ENCODE measurements at regions of chr6 and their contacts with region 1.

Region 1: GRCh38 chr6:35731736-35732532 is 4.9 kb upstream of the ARMC12 start:
- DNase-seq: peak; percentile 99
- ATAC-seq: peak; percentile 57
- H3K4me3 Mint-ChIP-seq: peak overlapping the region; percentile 77
- H3K27ac Mint-ChIP-seq: peak overlapping the region; percentile 95
- H3K4me1 Mint-ChIP-seq: peaks cover 84% of the 10 kb centered on the region
- H3K27me3 Mint-ChIP-seq: no peaks in the 10 kb centered on the region

Region 2: GRCh38 chr6:35297601-35298481 is 434.1 kb before region 1 on chr6 and contains the start of gene DEF6:
- CTCF ChIA-PET with region 1: no interaction called
- POLR2A ChIA-PET with region 1: no interaction called
- intact Hi-C with region 1: loop called (anchors 2 to 5 kb)
- DNase-seq: peak; percentile 95
- ATAC-seq: peak; percentile 82
- H3K4me3 Mint-ChIP-seq: peak within 1 kb of the TSS; percentile 89
- H3K27ac Mint-ChIP-seq: peak within 1 kb of the TSS; percentile 96
- H3K4me1 Mint-ChIP-seq: peaks cover 48% of the 10 kb centered on the region
- H3K27me3 Mint-ChIP-seq: no peaks in the 10 kb centered on the region
- total RNA-seq, gene DEF6: 74.1 to 86.6 TPM

Region 3: GRCh38 chr6:35552285-35552917 is 179.5 kb before region 1 on chr6:
- CTCF ChIA-PET with region 1: interaction called, 25 read pairs
- POLR2A ChIA-PET with region 1: no interaction called
- intact Hi-C with region 1: no loop called
- DNase-seq: peak; percentile 80
- ATAC-seq: peak; percentile 60
- H3K4me3 Mint-ChIP-seq: no peak overlapping the region
- H3K27ac Mint-ChIP-seq: no peak overlapping the region
- H3K4me1 Mint-ChIP-seq: no peaks in the 10 kb centered on the region
- H3K27me3 Mint-ChIP-seq: no peaks in the 10 kb centered on the region

Region 4: GRCh38 chr6:35601331-35602132 is 130.4 kb before region 1 on chr6:
- CTCF ChIA-PET with region 1: interaction called, 49 read pairs
- POLR2A ChIA-PET with region 1: interaction called, 3 read pairs
- intact Hi-C with region 1: loop called (anchors 5 kb)
- DNase-seq: peak; percentile 68
- ATAC-seq: peak; percentile 80
- H3K4me3 Mint-ChIP-seq: peak overlapping the region; percentile 47
- H3K27ac Mint-ChIP-seq: peak overlapping the region; percentile 80
- H3K4me1 Mint-ChIP-seq: peaks cover 76% of the 10 kb centered on the region
- H3K27me3 Mint-ChIP-seq: no peaks in the 10 kb centered on the region

Region 5: GRCh38 chr6:35651244-35651643 is 80.7 kb before region 1 on chr6:
- CTCF ChIA-PET with region 1: interaction called, 47 read pairs
- POLR2A ChIA-PET with region 1: no interaction called
- intact Hi-C with region 1: no loop called
- DNase-seq: no peak
- ATAC-seq: no peak
- H3K4me3 Mint-ChIP-seq: no peak overlapping the region
- H3K27ac Mint-ChIP-seq: no peak overlapping the region
- H3K4me1 Mint-ChIP-seq: peaks cover 50% of the 10 kb centered on the region
- H3K27me3 Mint-ChIP-seq: no peaks in the 10 kb centered on the region

Region 6: GRCh38 chr6:35688581-35689322 is 43.2 kb before region 1 on chr6 and contains the start of gene FKBP5:
- CTCF ChIA-PET with region 1: interaction called, 41 read pairs
- POLR2A ChIA-PET with region 1: interaction called, 6 read pairs
- intact Hi-C with region 1: loop called (anchors 1 kb)
- DNase-seq: peak; percentile 94
- ATAC-seq: peak; percentile 95
- H3K4me3 Mint-ChIP-seq: peak within 1 kb of the TSS; percentile 93
- H3K27ac Mint-ChIP-seq: peak within 1 kb of the TSS; percentile 93
- H3K4me1 Mint-ChIP-seq: peaks cover 8% of the 10 kb centered on the region
- H3K27me3 Mint-ChIP-seq: no peaks in the 10 kb centered on the region
- total RNA-seq, gene FKBP5: 140 to 141 TPM

Region 7: DNA sequence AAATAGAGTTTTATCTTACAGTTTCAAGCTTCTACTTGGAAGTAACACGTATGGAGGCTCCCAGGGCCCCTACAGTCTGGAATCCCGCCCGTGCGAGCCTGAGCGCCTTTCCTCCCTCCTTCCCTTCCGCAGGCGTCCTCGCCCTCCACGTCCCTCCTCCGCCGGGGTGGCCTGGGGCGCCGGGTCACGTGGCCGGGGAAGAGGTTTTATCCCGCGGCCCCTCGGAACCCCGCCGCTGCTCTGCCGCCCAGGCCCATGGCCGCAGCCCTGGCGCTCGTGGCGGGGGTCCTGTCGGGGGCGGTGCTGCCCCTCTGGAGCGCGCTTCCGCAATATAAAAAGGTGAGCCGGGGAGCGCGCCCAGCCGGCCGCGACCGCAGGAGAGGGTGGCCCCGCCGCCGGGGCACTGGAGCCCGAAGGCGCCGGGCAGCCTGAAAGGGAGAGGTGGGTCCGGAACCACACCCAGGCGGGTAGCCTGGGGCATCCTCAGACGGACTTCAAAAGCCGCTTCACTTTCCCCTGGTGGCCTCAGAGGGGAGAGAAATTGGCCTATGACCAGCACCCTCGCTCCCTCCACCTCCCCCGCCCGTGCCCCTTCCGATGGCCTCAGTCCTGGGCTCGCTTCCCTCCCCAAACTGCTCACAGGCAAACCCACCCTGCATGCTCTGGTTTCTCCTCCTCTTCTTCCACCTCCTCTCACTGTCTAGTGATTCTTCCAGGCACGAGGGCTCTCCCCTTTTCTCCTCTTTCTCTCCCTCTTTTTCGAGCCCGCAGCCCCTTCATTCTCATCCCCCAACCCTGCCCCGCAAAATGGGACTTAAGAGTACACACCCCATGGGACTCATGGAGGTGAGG is 44.7 kb after region 1 on chr6 and contains the start of gene CLPSL2:
- CTCF ChIA-PET with region 1: no interaction called
- POLR2A ChIA-PET with region 1: no interaction called
- intact Hi-C with region 1: no loop called
- DNase-seq: peak; percentile 18
- ATAC-seq: peak; percentile 33
- H3K4me3 Mint-ChIP-seq: peak within 1 kb of the TSS; percentile 9
- H3K27ac Mint-ChIP-seq: no peak within 1 kb of the TSS
- H3K4me1 Mint-ChIP-seq: peaks cover 5% of the 10 kb centered on the region
- H3K27me3 Mint-ChIP-seq: peaks cover 23% of the 10 kb centered on the region
- total RNA-seq, gene CLPSL2: not detected

Region 8: DNA sequence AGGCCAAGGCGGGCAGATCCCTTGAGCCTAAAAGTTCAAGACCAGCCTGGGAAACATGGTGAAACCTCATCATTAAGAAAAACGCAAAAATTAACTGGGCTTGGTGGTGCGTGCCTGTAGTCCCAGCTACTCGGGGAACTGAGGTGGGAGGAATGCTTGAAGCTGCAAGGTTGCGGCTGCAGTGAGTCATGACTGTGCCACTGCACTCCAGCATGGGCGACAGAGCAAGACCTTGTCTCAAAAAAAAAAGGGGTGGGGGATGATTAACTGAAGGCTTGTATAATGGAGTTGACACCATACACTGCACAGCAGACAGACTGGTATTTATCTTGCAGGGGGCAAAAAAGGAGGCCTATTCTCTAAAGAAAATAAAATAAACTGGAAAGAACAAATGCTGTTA is 161.3 kb after region 1 on chr6:
- CTCF ChIA-PET with region 1: no interaction called
- POLR2A ChIA-PET with region 1: no interaction called
- intact Hi-C with region 1: no loop called
- DNase-seq: no peak
- ATAC-seq: no peak
- H3K4me3 Mint-ChIP-seq: no peak overlapping the region
- H3K27ac Mint-ChIP-seq: no peak overlapping the region
- H3K4me1 Mint-ChIP-seq: peaks cover 14% of the 10 kb centered on the region
- H3K27me3 Mint-ChIP-seq: no peaks in the 10 kb centered on the region

Region 9: DNA sequence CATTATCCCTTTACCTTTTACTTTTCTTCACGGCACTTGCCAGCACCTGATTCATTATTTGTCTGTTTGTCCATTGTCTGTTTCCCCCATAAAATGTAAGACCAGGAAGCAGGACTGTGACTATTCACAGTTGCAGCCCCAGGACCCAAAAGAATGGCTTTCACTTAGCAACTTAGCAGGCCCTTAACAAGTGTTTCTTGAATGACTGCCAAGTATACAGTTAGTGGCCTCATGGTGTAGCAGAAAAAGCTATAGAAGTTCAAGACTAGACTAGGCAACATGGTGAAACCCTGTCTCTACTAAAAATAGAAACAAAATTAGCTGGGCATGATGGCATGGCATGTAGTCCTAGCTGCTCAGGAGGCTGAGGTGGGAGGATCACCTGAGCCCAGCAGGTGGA is 288.2 kb after region 1 on chr6:
- CTCF ChIA-PET with region 1: no interaction called
- POLR2A ChIA-PET with region 1: no interaction called
- intact Hi-C with region 1: no loop called
- DNase-seq: no peak
- ATAC-seq: no peak
- H3K4me3 Mint-ChIP-seq: no peak overlapping the region
- H3K27ac Mint-ChIP-seq: no peak overlapping the region
- H3K4me1 Mint-ChIP-seq: peaks cover 8% of the 10 kb centered on the region
- H3K27me3 Mint-ChIP-seq: peaks cover 15% of the 10 kb centered on the region

Region 10: DNA sequence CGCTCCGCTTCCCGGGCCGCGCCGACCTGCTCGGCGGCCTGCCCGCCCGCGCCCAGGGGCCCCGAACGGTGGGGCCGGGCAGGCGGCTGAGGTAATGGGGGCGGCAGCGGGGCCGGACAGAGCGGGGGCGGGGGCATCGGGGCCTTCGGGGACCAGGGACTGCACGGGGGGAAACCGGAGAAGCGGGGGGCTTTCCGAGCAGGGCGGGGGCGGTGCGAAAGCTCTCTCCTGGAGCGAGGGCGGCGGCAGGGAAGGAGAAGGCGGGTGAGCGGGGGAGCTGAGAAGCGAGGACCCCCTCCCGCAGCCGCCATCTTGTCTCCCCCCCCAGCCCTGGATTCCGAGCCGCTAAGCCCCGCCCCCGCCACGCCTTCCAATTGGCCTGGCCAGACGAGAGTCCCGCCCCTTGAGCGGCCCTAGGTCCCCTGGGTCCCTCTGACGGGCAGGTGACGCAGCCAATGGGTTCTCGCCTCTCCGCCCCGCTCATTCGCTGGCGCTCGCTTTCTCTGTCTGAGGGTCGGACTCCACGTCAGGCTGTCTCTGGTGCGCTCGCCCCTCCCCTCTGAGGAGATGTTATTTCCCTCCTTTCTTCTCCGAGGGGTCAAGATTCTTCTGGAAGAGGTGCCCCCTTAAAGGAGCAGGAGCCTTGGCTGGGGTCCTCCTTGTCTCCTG is 465.1 kb after region 1 on chr6:
- CTCF ChIA-PET with region 1: no interaction called
- POLR2A ChIA-PET with region 1: no interaction called
- intact Hi-C with region 1: loop called in 1 of 2 experiments (anchors 5 kb)
- DNase-seq: peak; percentile 100
- ATAC-seq: peak; percentile 96
- H3K4me3 Mint-ChIP-seq: peak overlapping the region; percentile 82
- H3K27ac Mint-ChIP-seq: peak overlapping the region; percentile 90
- H3K4me1 Mint-ChIP-seq: peaks cover 45% of the 10 kb centered on the region
- H3K27me3 Mint-ChIP-seq: no peaks in the 10 kb centered on the region

Measured in activated CD4-positive, alpha-beta T cell treated with anti-CD3 and anti-CD28 coated beads for 36 hours (primary cell).